ENCODE measurements at regions of chr10 and their contacts with region 1.

Region 1: GRCh38 chr10:101932183-101932582 is 88.6 kb upstream of the KCNIP2 start:
- DNase-seq: no peak
- H3K4me3 Mint-ChIP-seq: no peak overlapping the region
- H3K27ac Mint-ChIP-seq: peak overlapping the region; percentile 20
- H3K4me1 Mint-ChIP-seq: peaks cover 9% of the 10 kb centered on the region
- H3K27me3 Mint-ChIP-seq: no peaks in the 10 kb centered on the region

Region 2: DNA sequence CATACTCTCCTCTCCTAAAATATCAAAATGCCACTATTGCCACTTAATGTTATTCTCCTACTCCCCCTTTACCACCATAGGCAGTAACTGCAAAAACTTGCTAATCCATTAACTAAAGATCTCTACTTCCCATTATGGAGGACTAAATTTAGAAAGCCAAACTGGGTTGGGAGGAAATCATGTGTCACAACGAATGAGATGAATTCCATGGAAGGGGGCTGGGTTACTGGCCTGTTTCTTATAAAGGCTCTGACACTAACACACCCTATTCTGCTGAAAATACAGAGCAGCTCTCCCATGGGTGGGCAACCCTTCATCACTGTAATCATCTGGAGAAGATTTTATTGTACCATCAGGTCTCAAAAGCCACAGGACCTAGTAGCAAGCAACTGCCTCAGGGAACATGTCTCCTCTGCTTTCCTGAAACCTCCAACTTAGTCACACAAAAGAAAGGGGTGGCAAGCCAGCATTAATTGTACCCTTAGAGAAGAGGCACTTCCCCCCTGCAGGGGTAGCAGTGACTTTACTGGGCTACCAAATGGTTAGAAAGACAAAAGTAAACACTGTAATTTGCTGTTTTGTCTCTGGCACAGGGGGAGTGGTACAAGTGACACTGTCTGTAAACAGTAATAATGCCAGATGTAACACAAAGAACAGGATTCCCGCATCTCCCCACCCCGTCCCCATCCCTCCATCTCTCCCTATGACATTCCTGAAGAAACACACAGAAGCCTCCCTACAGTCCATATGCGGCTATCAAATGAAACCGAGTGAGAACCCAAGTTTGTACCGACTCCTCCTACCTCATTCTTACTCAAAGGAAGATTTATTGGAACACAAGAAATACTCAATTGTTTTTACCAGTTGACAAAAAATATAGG is 42.1 kb after region 1 on chr10:
- intact Hi-C with region 1: loop called (anchors 5 kb)
- DNase-seq: no peak
- H3K4me3 Mint-ChIP-seq: peak overlapping the region; percentile 79
- H3K27ac Mint-ChIP-seq: peak overlapping the region; percentile 97
- H3K4me1 Mint-ChIP-seq: peaks cover 25% of the 10 kb centered on the region
- H3K27me3 Mint-ChIP-seq: no peaks in the 10 kb centered on the region